ENCODE measurements at regions of chr1 and their contacts with region 1.

Region 1: GRCh38 chr1:154936555-154937084 is at the start of gene PMVK:
- DNase-seq: peak; percentile 91 to 98
- ATAC-seq: peak; percentile 86 to 97 (median 87)
- H3K4me3 ChIP-seq: peak within 1 kb of the TSS; percentile 85
- H3K4me3 Mint-ChIP-seq: peak within 1 kb of the TSS; percentile 100
- H3K27ac ChIP-seq: peak within 1 kb of the TSS; percentile 97
- H3K27ac Mint-ChIP-seq: peak within 1 kb of the TSS; percentile 99 to 100
- H3K4me1 ChIP-seq: peaks cover 36% of the 10 kb centered on the region
- H3K4me1 Mint-ChIP-seq: peaks cover 19 to 40% of the 10 kb centered on the region in 2 donors
- H3K27me3 ChIP-seq: no peaks in the 10 kb centered on the region
- H3K27me3 Mint-ChIP-seq: no peaks in the 10 kb centered on the region
- CTCF ChIP-seq: no peak
- total RNA-seq, gene PMVK: 9.0 to 12.1 (median 11.0) TPM

Region 2: DNA sequence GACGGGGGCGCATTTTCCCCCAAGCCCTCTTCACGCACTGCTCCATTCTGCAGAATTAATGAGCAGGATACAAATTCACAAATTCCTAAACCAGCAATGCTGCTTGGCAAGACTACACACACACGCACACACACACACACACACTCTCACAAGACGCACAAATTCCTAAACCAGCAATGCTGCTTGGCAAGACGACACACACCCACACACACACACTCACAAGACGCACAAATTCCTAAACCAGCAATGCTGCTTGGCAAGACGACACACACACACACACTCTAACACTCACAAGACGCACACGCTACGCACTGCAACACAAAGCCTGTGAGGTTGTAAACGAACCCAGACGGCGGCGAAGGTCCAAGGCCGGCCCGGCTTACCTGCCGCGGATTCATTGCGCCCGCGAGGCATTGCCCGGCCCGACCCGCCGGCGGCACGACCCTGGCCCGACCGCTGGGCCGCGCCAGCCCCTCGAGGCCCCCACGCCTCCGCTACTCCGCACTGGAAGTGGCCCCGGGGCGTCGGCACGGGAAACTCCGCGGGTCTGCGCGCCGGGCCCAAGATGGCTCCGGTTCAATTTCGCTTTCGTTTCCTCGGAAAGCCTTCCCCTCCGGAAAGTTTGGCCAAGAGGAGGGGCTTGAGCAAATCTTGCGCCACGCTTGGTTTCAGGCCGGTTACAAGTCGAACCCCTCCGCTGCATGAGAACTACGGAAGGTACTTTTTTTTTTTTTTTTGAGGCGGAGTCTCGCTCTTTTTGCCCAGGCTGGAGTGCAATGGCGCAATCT is 328.8 kb before region 1 on chr1 and contains the start of gene ADAR:
- intact Hi-C with region 1: loop called (anchors 5 kb)
- DNase-seq: peak; percentile 84 to 97
- ATAC-seq: peak; percentile 89 to 95 (median 90)
- H3K4me3 ChIP-seq: peak within 1 kb of the TSS; percentile 77
- H3K4me3 Mint-ChIP-seq: peak within 1 kb of the TSS; percentile 89
- H3K27ac ChIP-seq: peak within 1 kb of the TSS; percentile 91
- H3K27ac Mint-ChIP-seq: peak within 1 kb of the TSS; percentile 87 to 95
- H3K4me1 ChIP-seq: peaks cover 47% of the 10 kb centered on the region
- H3K4me1 Mint-ChIP-seq: peaks cover 48 to 64% of the 10 kb centered on the region in 2 donors
- H3K27me3 ChIP-seq: no peaks in the 10 kb centered on the region
- H3K27me3 Mint-ChIP-seq: no peaks in the 10 kb centered on the region
- CTCF ChIP-seq: no peak
- total RNA-seq, gene ADAR: 260 to 281 (median 265) TPM

Region 3: DNA sequence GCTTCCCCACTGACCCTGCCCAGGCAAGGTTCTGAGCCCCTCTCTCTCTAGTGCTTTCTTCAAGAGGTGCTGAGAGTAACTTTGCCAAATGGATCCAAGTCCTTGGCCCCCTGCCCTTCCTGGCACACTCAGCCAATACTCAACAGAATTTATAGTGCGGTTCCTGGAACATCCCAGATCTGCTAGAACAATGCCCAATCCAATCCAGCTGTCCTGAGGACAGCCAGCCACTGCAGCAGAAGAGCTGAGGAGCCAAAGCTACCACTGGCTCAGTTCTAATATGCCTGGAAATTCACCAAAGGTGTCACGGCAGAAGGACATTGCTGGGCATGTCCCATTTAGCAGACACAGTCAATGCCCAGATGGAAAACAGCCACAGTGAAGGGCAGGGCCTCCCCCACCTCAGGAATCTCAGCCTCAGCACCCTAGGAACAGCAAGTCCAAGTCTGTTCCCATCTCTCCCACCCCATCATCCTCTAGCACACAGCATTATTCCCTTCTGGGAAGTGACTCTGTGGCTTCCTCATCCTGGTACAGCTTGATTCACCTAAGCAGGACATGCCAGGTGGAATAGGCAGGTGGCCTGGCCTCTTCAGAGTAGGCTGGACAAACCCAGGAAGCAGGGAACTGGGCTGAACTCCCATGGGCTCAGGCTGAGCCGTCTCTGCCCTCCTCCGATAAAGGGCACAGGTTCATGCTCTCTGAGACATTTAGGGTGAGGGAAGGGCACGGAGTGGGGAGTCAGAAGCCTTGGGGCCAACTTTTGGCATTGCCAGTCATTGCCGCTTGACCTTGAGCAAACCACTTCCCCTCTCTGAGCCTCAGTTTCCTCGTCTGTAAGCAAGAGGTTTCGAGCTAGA is 24.7 kb before region 1 on chr1:
- intact Hi-C with region 1: no loop called
- DNase-seq: no peak
- ATAC-seq: no peak
- H3K4me3 ChIP-seq: no peak overlapping the region
- H3K4me3 Mint-ChIP-seq: no peak overlapping the region
- H3K27ac ChIP-seq: no peak overlapping the region
- H3K27ac Mint-ChIP-seq: no peak overlapping the region
- H3K4me1 ChIP-seq: no peaks in the 10 kb centered on the region
- H3K4me1 Mint-ChIP-seq: no peaks in the 10 kb centered on the region
- H3K27me3 ChIP-seq: no peaks in the 10 kb centered on the region
- H3K27me3 Mint-ChIP-seq: no peaks in the 10 kb centered on the region
- CTCF ChIP-seq: no peak

Region 4: GRCh38 chr1:154962263-154962749 is 25.7 kb after region 1 on chr1:
- intact Hi-C with region 1: no loop called
- DNase-seq: peak in 1 of 2 donors; percentile 50
- ATAC-seq: peak; percentile 1 to 2 (median 2)
- H3K4me3 ChIP-seq: peak overlapping the region; percentile 65
- H3K4me3 Mint-ChIP-seq: peak overlapping the region; percentile 89
- H3K27ac ChIP-seq: peak overlapping the region; percentile 93
- H3K27ac Mint-ChIP-seq: peak overlapping the region; percentile 88
- H3K4me1 ChIP-seq: peaks cover 20% of the 10 kb centered on the region
- H3K4me1 Mint-ChIP-seq: peaks cover 18 to 29% of the 10 kb centered on the region in 2 donors
- H3K27me3 ChIP-seq: no peaks in the 10 kb centered on the region
- H3K27me3 Mint-ChIP-seq: no peaks in the 10 kb centered on the region
- CTCF ChIP-seq: no peak

Region 5: DNA sequence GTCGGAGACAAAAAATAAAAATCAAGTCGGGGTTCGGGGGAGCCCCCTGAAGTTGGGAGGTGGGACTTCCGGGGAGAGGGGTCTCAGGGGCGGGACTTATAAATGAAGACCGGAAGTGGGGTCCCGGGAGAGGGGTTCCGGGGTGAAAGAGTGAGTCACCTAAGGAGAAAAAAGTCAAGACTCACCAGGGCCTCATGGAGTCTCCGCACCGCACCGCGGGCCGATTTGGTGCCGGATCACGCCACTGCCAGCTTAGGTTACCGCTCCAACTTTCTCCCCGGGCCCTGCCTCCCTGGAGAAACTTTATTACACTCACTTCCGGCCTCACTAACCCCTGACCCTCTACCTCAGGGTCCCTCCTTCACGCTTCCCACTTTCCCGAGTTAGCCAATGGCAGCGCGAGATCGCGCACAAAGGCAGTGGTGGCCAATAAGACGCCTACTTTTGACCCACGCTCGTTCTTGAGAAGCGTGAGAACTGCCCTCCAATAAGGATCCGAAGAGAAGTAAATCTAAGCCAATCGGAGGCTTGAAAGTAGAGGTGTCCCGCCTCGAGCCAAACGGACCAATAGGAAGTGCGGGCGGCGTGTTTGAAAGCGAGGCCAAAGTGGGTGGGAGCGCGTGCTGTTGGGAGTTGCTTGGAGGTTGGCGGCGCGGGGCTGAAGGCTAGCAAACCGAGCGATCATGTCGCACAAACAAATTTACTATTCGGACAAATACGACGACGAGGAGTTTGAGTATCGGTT is 37.6 kb after region 1 on chr1 and contains the start of gene CKS1B:
- intact Hi-C with region 1: loop called (anchors 5 kb)
- DNase-seq: peak; percentile 96 to 99
- ATAC-seq: peak; percentile 78 to 94 (median 85)
- H3K4me3 ChIP-seq: peak within 1 kb of the TSS; percentile 91
- H3K4me3 Mint-ChIP-seq: no peak within 1 kb of the TSS
- H3K27ac ChIP-seq: peak within 1 kb of the TSS; percentile 99
- H3K27ac Mint-ChIP-seq: no peak within 1 kb of the TSS
- H3K4me1 ChIP-seq: peaks cover 43% of the 10 kb centered on the region
- H3K4me1 Mint-ChIP-seq: peaks cover 15 to 26% of the 10 kb centered on the region in 2 donors
- H3K27me3 ChIP-seq: no peaks in the 10 kb centered on the region
- H3K27me3 Mint-ChIP-seq: no peaks in the 10 kb centered on the region
- CTCF ChIP-seq: no peak
- total RNA-seq, gene CKS1B: 8.5 to 13.0 (median 12.9) TPM

Region 6: GRCh38 chr1:155001675-155002463 is 65.2 kb after region 1 on chr1:
- intact Hi-C with region 1: loop called (anchors 1 kb)
- DNase-seq: peak; percentile 97 to 98
- ATAC-seq: peak; percentile 80 to 93 (median 89)
- H3K4me3 ChIP-seq: peak overlapping the region; percentile 75
- H3K4me3 Mint-ChIP-seq: peak overlapping the region; percentile 95
- H3K27ac ChIP-seq: peak overlapping the region; percentile 94
- H3K27ac Mint-ChIP-seq: peak overlapping the region; percentile 82 to 92
- H3K4me1 ChIP-seq: peaks cover 78% of the 10 kb centered on the region
- H3K4me1 Mint-ChIP-seq: peaks cover 30 to 66% of the 10 kb centered on the region in 2 donors
- H3K27me3 ChIP-seq: no peaks in the 10 kb centered on the region
- H3K27me3 Mint-ChIP-seq: no peaks in the 10 kb centered on the region
- CTCF ChIP-seq: no peak

Region 7: GRCh38 chr1:155063550-155064110 is 127.0 kb after region 1 on chr1 and contains the start of gene EFNA4:
- intact Hi-C with region 1: loop called (anchors 5 kb)
- DNase-seq: peak; percentile 76 to 92
- ATAC-seq: peak; percentile 79 to 90 (median 83)
- H3K4me3 ChIP-seq: peak within 1 kb of the TSS; percentile 57
- H3K4me3 Mint-ChIP-seq: peak within 1 kb of the TSS; percentile 92
- H3K27ac ChIP-seq: peak within 1 kb of the TSS; percentile 20
- H3K27ac Mint-ChIP-seq: peak within 1 kb of the TSS; percentile 71 to 80
- H3K4me1 ChIP-seq: peaks cover 33% of the 10 kb centered on the region
- H3K4me1 Mint-ChIP-seq: peaks cover 19 to 40% of the 10 kb centered on the region in 2 donors
- H3K27me3 ChIP-seq: no peaks in the 10 kb centered on the region
- H3K27me3 Mint-ChIP-seq: peaks cover 0 to 2% of the 10 kb centered on the region in 2 donors
- CTCF ChIP-seq: no peak
- total RNA-seq, gene EFNA4: 4.6 to 6.8 (median 5.5) TPM

Region 8: DNA sequence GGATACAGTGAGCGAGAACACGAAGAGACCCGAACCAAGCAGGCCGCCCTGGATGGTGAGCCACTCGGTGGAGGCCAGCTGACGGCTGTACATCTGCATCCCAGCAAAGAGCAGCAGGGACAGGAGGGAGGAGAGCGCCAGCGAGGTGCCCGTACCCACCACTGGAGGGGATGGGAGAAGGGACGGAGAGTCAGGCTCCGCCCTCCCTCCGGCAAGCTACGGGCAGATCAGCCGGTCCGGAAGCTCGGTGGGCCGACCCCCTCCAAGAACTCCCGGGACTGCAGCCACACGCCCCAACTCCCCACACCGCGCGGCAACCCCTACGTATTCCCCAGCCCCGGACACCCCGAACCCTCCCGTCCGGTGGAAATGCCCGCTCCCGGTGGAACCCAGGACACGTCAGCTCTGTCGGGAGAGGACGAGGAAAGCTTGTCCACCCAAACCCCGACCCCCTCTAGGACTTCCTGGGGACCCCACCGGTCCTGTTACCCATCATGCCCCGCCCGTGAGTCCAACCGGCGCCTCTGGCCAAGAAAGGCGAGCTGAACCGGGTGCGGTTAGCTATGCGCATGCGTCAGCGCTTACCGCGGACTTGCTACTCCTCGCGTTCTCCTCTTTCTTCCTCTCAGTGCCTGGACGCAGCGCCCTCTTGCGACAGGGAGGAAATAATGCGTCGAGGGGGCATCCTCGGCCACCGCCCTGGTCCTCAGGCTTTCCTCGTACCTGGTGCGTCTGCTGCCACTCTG is 236.3 kb after region 1 on chr1 and contains the start of gene KRTCAP2:
- intact Hi-C with region 1: no loop called
- DNase-seq: peak; percentile 89 to 98
- ATAC-seq: peak; percentile 82 to 93 (median 85)
- H3K4me3 ChIP-seq: peak within 1 kb of the TSS; percentile 68
- H3K4me3 Mint-ChIP-seq: peak within 1 kb of the TSS; percentile 95
- H3K27ac ChIP-seq: peak within 1 kb of the TSS; percentile 89
- H3K27ac Mint-ChIP-seq: peak within 1 kb of the TSS; percentile 95 to 99
- H3K4me1 ChIP-seq: peaks cover 34% of the 10 kb centered on the region
- H3K4me1 Mint-ChIP-seq: peaks cover 28 to 41% of the 10 kb centered on the region in 2 donors
- H3K27me3 ChIP-seq: no peaks in the 10 kb centered on the region
- H3K27me3 Mint-ChIP-seq: peaks cover 0 to 5% of the 10 kb centered on the region in 2 donors
- CTCF ChIP-seq: peak; percentile 94
- total RNA-seq, gene KRTCAP2: 95.3 to 113 (median 104) TPM